Activated CD8-positive, alpha-beta T cell treated with anti-CD3 and anti-CD28 coated beads, Interleukin-2, amount 10 ng/mL, durations not matched to agents 7 days and 5 days (primary cell): ENCODE measurements at regions of chr20 and their contacts with region 1.

Region 1: GRCh38 chr20:3854462-3854871 is 7.8 kb downstream of the MAVS start:
- DNase-seq: no peak
- ATAC-seq: peak; percentile 28
- H3K4me3 Mint-ChIP-seq: no peak overlapping the region
- H3K27ac Mint-ChIP-seq: no peak overlapping the region
- H3K4me1 Mint-ChIP-seq: peaks cover 5% of the 10 kb centered on the region
- H3K27me3 Mint-ChIP-seq: no peaks in the 10 kb centered on the region

Region 2: GRCh38 chr20:3670511-3670910 is 184.0 kb before region 1 on chr20:
- CTCF ChIA-PET with region 1: no interaction called
- POLR2A ChIA-PET with region 1: no interaction called
- DNase-seq: no peak
- ATAC-seq: no peak
- H3K4me3 Mint-ChIP-seq: no peak overlapping the region
- H3K27ac Mint-ChIP-seq: no peak overlapping the region
- H3K4me1 Mint-ChIP-seq: peaks cover 27% of the 10 kb centered on the region
- H3K27me3 Mint-ChIP-seq: peaks cover 66% of the 10 kb centered on the region

Region 3: DNA sequence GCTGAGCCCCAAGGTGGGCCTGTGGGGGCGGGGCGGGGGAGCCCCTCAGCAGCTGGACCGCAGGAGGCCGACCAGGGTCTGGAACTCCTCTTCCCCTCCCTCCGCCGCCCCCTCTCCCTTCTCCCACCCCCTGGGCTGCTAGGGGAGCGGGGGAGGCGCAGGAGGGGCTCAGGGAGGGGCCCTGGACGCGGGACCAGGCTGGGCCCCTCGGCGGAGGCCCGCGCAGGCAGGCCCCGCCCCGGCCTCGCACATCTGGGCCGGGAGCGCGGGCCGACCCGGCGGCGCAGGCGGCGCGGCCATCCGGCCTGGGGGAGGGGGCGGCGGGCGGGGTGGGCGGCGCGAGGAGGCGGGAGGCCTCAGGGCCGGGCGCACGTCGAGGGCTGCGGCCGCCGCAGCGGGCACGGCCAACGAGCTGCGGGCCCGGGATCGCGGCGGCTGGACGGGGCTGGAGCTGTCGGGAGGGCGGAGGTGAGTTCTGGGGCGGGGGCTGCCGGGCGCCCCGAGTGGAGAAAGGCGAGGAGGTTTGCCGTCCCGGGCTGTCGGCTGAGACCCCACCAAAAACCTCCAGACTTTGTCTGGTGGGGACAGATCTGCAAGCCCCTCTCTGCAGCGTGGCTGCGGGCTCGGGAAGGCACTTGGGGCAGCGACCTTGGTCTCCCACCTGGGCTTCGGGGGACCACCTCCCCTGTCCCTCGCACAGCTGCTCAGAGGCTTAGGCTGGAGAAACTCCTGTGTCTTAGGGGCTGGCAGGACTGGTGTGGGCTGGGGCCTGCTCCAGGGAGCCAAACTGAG is 121.9 kb before region 1 on chr20 and contains the start of gene HSPA12B:
- CTCF ChIA-PET with region 1: no interaction called
- POLR2A ChIA-PET with region 1: no interaction called
- DNase-seq: no peak
- ATAC-seq: no peak
- H3K4me3 Mint-ChIP-seq: no peak within 1 kb of the TSS
- H3K27ac Mint-ChIP-seq: no peak within 1 kb of the TSS
- H3K4me1 Mint-ChIP-seq: peaks cover 4% of the 10 kb centered on the region
- H3K27me3 Mint-ChIP-seq: peaks cover 43% of the 10 kb centered on the region
- total RNA-seq, gene HSPA12B: not detected

Region 4: DNA sequence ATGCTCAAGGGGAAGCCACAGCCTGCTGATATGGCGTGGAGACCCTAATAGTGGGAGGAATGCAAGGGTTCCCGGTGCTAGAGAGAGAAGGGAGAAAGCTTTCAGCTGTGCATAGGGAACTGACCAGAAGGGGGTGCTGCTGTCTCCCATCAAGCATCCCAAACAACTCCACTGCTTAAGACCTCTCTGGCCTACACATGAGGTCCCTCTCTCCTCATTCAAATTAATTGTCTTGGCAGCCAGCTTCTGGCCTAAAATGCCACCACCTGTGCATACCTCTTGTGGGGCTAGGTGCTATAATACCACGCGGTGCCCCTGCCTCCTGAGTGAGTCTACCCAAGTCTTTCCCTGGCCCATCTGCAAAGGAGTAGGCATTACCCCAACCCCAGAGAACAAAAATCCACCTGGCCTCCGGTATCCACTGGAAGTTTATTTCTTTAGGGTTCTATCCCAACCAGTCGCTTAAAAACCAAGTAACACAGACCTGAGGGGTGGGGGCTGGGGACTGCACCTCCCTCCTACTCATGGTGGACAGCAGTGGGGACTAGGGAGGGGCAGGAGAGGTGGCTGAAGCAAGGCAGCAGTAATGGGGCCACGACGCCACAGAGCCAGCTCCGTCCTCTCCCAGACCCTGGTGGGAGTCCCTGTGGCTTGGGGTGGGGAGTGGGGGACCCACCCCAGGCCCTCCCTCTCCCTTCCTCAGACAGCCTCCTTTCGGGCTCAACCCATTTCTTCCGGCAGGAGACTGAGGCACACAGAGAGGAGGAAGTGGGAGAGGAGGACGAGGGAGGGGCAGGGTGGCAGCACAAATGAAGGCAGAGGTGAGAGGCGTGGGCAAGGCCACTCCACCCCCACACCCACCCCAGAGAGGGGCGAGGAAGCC is 101.1 kb before region 1 on chr20:
- CTCF ChIA-PET with region 1: interaction called, 19 read pairs
- POLR2A ChIA-PET with region 1: no interaction called
- DNase-seq: peak; percentile 72
- ATAC-seq: peak; percentile 71
- H3K4me3 Mint-ChIP-seq: no peak overlapping the region
- H3K27ac Mint-ChIP-seq: no peak overlapping the region
- H3K4me1 Mint-ChIP-seq: peaks cover 4% of the 10 kb centered on the region
- H3K27me3 Mint-ChIP-seq: no peaks in the 10 kb centered on the region

Region 5: GRCh38 chr20:3786665-3787323 is 67.7 kb before region 1 on chr20 and contains the start of gene CENPB:
- CTCF ChIA-PET with region 1: interaction called, 20 read pairs
- POLR2A ChIA-PET with region 1: interaction called, 5 read pairs
- DNase-seq: peak; percentile 91
- ATAC-seq: peak; percentile 94
- H3K4me3 Mint-ChIP-seq: peak within 1 kb of the TSS; percentile 81
- H3K27ac Mint-ChIP-seq: peak within 1 kb of the TSS; percentile 85
- H3K4me1 Mint-ChIP-seq: peaks cover 45% of the 10 kb centered on the region
- H3K27me3 Mint-ChIP-seq: no peaks in the 10 kb centered on the region
- total RNA-seq, gene CENPB: 87.1 to 92.0 TPM

Region 6: GRCh38 chr20:3866466-3866916 is 12.0 kb after region 1 on chr20:
- CTCF ChIA-PET with region 1: interaction called, 13 read pairs
- POLR2A ChIA-PET with region 1: interaction called, 3 read pairs
- DNase-seq: no peak
- ATAC-seq: no peak
- H3K4me3 Mint-ChIP-seq: no peak overlapping the region
- H3K27ac Mint-ChIP-seq: peak overlapping the region; percentile 46
- H3K4me1 Mint-ChIP-seq: no peaks in the 10 kb centered on the region
- H3K27me3 Mint-ChIP-seq: no peaks in the 10 kb centered on the region